Heart left ventricle (tissue), 16 donors: ENCODE measurements at regions of chr5 and their contacts with region 1.

Region 1: DNA sequence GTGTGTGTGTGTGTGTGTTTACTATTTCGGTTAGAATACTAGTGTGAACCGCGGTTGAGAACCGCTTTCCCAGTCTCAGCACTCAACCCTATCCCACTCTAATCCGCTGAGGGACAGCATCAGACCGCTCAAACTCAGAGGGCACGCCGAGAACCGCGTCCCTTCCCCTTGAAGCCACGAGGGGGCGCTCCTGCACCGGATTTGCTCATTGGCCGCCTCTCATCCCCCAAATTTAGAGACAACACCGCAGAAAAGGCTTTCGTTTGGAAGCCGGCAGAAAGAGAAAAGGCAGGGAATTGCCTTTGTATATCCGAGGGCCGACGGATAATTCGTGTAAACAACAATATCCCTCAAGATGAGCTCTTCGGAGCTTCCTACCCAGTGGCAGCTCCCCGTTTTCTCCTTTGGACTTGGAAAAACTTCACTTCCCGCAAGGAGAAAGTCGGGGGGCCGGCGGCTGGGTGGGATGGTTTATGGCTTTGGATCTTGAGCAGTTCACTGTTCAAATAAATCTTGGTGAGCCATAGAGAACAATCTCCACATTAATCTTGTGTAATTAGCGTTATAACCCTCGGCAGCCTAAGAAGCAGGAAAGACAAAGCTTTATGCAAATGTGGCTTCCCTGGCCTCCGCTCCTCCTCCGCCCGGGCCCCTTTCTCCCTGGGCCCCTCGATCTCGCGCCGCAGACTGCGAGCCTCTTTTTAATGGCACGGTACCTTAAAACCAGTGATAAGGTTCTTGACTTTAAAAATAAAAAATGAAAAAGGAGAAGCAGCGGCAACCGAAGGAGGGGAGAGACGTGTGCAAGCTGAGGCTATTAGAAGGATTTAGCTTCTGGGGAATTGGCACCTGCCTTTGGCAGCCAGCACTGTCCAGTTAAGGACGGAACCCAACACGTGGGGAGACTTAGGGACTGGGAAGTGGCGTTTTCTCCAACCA is 296.8 kb downstream of the PARP8 start:
- DNase-seq: peak; percentile 44 to 79 (median 55)
- ATAC-seq: peak; percentile 76 to 92 (median 88)
- H3K4me3 ChIP-seq: peak overlapping the region; percentile 20 to 57 (median 43)
- H3K27ac ChIP-seq: no peak overlapping the region
- H3K4me1 ChIP-seq: peaks cover 0 to 37% (median 23%) of the 10 kb centered on the region in 12 donors
- H3K27me3 ChIP-seq: peaks cover 28 to 81% (median 53%) of the 10 kb centered on the region in 9 donors
- CTCF ChIP-seq: peak; percentile 76 to 92 (median 82)
- POLR2A ChIP-seq: no peak

Region 2: GRCh38 chr5:52007230-52007858 is 1044.1 kb after region 1 on chr5:
- intact Hi-C with region 1: loop called in 9 of 10 experiments (anchors 2 to 5 kb)
- DNase-seq: no peak
- ATAC-seq: no peak
- H3K4me3 ChIP-seq: no peak overlapping the region
- H3K27ac ChIP-seq: no peak overlapping the region
- H3K4me1 ChIP-seq: no peaks in the 10 kb centered on the region
- H3K27me3 ChIP-seq: peaks cover 0 to 5% (median 0%) of the 10 kb centered on the region in 9 donors
- CTCF ChIP-seq: peak; percentile 26 to 64 (median 44)
- POLR2A ChIP-seq: no peak

Region 3: DNA sequence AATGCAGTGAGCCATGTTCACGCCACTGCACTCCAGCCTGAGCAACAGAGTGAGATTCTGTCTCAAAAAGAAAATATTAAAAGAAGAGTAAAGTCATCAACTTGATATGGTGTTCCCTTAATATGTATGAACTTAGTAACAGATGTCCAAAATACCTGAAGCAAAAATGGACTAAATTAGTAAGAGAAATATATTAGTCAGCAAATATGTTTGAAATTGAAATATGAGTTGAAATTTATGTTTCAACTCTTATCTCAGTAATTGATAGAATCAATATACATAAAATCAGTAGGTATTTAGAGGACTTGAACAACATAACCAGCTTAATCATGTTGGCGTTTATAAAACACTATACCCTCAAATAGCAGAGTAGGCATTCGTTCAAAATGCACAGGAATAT is 1088.6 kb after region 1 on chr5:
- intact Hi-C with region 1: no loop called
- DNase-seq: no peak
- ATAC-seq: no peak
- H3K4me3 ChIP-seq: no peak overlapping the region
- H3K27ac ChIP-seq: no peak overlapping the region
- H3K4me1 ChIP-seq: no peaks in the 10 kb centered on the region
- H3K27me3 ChIP-seq: no peaks in the 10 kb centered on the region
- CTCF ChIP-seq: no peak
- POLR2A ChIP-seq: no peak

Region 4: GRCh38 chr5:52657247-52657645 is 1694.0 kb after region 1 on chr5:
- intact Hi-C with region 1: loop called (anchors 2 to 10 kb)
- DNase-seq: no peak
- ATAC-seq: no peak
- H3K4me3 ChIP-seq: no peak overlapping the region
- H3K27ac ChIP-seq: no peak overlapping the region
- H3K4me1 ChIP-seq: peaks cover 0 to 11% (median 0%) of the 10 kb centered on the region in 12 donors
- H3K27me3 ChIP-seq: peaks cover 0 to 20% (median 0%) of the 10 kb centered on the region in 9 donors
- CTCF ChIP-seq: peak; percentile 50 to 73 (median 63)
- POLR2A ChIP-seq: no peak

Region 5: DNA sequence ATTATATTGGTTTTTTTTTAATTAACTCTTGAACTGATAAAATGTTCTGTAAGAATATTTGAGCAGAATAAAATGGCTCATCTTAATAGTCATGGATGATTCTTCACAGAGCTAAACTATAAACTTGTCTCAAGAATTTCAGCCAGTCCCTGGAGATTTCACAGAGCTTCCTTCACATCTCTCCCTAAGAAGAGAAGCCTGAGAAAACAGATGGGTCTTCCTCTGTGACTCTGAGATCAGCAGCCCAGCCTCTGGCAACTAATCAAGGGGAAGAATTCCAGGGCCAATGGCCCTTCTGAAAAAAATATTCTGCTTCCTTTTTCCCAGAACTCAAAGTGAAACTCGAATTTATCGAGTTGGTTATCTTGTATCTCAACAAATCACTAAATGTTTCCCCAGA is 1702.4 kb after region 1 on chr5:
- intact Hi-C with region 1: loop called in 1 of 10 experiments (anchors 10 kb)
- DNase-seq: peak in 4 of 5 donors; percentile 30 to 62 (median 48)
- ATAC-seq: peak in 3 of 4 donors; percentile 52 to 83 (median 76)
- H3K4me3 ChIP-seq: peak overlapping the region in 3 of 12 donors; percentile 9 to 26 (median 25)
- H3K27ac ChIP-seq: peak overlapping the region in 10 of 12 donors; percentile 15 to 59 (median 41)
- H3K4me1 ChIP-seq: peaks cover 0 to 22% (median 6%) of the 10 kb centered on the region in 12 donors
- H3K27me3 ChIP-seq: no peaks in the 10 kb centered on the region
- CTCF ChIP-seq: no peak
- POLR2A ChIP-seq: no peak